ENCODE measurements at regions of chr12 and their contacts with region 1.

Region 1: GRCh38 chr12:93894391-93895088 is 217.4 kb downstream of the CRADD start:
- DNase-seq: peak; percentile 85 to 95
- ATAC-seq: peak; percentile 88 to 96 (median 90)
- H3K4me3 ChIP-seq: peak overlapping the region in 7 of 10 donors; percentile 7 to 35 (median 28)
- H3K27ac ChIP-seq: peak overlapping the region; percentile 70 to 94 (median 86)
- H3K4me1 ChIP-seq: peaks cover 20 to 55% (median 42%) of the 10 kb centered on the region in 9 donors
- H3K27me3 ChIP-seq: no peaks in the 10 kb centered on the region
- CTCF ChIP-seq: peak in 2 of 9 donors; percentile 5 to 8

Region 2: DNA sequence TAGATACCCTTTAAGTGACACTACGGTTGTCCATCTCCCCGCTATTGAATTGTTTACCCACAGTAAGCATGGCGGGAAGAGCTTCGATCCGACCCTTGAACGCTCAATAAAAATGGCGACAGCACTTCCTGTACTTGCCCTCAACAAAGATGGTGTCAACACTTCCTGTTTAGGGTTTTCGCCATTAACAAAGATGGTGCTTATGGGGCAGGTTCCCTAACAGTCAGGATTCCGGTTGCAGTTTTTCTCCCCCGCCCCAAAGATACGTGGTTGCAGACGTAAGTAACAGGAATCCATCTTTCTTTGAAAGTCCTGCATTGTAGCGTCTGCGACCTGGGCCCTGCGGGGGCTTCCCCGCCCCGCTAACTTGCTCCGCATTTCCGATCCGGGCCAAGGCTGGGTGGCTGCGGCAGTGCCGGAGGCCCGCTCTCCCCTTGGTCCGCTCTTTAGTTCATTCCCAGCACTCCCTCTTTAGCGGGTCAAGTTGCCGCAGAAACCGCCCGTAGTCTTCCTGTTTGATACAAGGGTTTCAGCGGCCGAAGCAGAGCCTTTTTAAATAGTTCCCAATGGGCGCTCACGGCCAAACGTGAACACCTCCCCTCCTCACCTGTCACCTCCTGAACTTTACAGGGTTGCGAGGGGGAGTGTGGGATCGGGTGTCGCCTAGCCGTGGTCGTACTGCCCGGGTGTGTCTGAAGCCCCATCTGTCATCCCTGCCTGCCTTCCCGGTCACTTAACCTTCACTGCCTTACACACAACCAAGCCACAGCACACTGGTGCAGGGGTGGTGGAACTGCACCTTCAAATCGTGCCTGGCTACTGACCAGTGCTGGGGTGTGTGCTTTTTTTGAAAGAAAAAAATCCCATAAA is 217.1 kb before region 1 on chr12 and contains the start of gene CRADD:
- intact Hi-C with region 1: loop called in 3 of 10 experiments (anchors 5 to 10 kb)
- DNase-seq: peak; percentile 67 to 93
- ATAC-seq: peak; percentile 91 to 97 (median 94)
- H3K4me3 ChIP-seq: peak within 1 kb of the TSS; percentile 48 to 80 (median 66)
- H3K27ac ChIP-seq: peak within 1 kb of the TSS; percentile 86 to 99 (median 98)
- H3K4me1 ChIP-seq: peaks cover 0 to 51% (median 27%) of the 10 kb centered on the region in 9 donors
- H3K27me3 ChIP-seq: no peaks in the 10 kb centered on the region
- CTCF ChIP-seq: no peak
- total RNA-seq, gene CRADD: 36.3 to 80.1 (median 60.2) TPM

Region 3: DNA sequence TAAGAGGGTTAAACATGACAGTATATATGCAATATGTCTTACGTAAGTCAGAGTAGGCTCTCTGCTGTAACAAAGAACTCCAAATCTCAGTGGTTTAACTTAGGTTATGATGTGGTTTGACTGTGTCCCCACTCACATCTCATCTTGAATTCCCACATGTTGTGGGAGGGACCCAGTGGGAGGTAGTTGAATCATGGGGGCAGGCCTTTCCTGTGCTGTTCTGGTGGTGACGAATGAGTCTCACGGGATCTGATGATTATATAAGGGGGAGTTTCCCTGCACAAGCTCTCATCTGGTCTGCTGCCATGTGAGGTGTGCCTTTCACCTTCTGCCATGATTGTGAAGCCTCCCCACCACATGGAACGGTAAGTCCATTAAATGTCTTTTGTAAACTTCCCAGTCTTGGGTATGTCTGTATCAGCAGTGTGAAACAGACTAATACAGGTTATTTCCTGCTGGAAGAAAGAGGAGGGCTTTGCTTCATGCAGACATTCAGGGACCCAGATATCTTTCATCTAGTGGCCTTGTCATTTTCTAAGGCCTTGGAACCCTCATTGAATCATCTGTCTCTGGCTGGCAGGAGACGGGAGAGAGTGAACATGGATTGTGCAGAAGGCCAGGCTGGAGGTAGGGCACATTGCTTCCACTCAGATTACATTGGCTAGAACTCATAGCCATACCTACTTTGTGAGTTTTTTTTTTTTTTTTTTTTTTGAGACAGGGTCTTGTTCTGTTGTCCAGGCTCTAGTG is 121.2 kb before region 1 on chr12:
- intact Hi-C with region 1: loop called in 5 of 10 experiments (anchors 5 to 10 kb)
- DNase-seq: no peak
- ATAC-seq: peak in 4 of 8 donors; percentile 8 to 46 (median 20)
- H3K4me3 ChIP-seq: no peak overlapping the region
- H3K27ac ChIP-seq: peak overlapping the region in 1 of 10 donors; percentile 33
- H3K4me1 ChIP-seq: peaks cover 16 to 42% (median 36%) of the 10 kb centered on the region in 9 donors
- H3K27me3 ChIP-seq: no peaks in the 10 kb centered on the region
- CTCF ChIP-seq: no peak

Region 4: DNA sequence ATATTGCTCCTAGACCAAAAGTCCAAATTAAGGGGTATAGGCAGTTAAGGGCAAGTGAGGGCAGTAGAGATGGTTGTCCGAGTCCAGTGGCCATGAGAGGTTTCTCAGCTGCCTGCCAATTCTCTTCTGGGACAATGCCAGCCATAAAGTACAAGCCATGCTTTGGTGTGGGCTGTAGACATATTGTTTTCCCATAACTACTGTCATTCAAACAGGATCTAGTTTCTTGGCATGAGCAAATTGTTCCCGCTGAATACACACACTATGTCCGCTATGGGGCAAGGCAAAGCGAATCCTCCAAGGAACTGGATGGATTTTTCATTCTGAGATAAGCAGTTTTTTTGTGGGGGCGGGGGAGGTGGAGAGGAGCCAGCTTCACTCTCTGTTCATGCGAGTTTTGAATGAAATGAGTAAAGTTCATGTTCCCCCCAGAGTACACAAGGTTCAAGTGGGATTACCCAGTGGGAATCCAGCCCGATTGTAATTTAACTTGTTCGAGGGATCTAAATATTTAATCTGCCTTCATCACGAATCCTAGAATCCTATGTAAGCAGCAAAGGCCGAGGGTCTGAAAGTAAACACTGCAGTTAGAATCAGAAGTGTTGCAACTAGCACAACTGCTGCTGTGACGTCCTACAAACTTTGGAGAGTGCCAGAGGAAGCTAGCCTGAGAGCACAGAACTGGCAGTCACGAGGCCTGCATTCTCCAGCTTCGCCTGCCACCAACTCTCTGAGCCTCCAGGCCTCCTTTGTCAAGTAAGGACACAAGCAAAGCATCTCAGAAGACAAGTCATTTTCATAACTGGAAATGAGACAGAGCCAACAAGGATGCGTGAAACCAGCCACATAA is 80.3 kb before region 1 on chr12:
- intact Hi-C with region 1: loop called in 5 of 10 experiments (anchors 2 to 10 kb)
- DNase-seq: peak; percentile 74 to 86
- ATAC-seq: peak; percentile 80 to 94 (median 90)
- H3K4me3 ChIP-seq: peak overlapping the region in 7 of 10 donors; percentile 1 to 29 (median 18)
- H3K27ac ChIP-seq: peak overlapping the region; percentile 80 to 96 (median 90)
- H3K4me1 ChIP-seq: peaks cover 25 to 73% (median 62%) of the 10 kb centered on the region in 9 donors
- H3K27me3 ChIP-seq: no peaks in the 10 kb centered on the region
- CTCF ChIP-seq: peak in 3 of 9 donors; percentile 11 to 26 (median 12)

Region 5: DNA sequence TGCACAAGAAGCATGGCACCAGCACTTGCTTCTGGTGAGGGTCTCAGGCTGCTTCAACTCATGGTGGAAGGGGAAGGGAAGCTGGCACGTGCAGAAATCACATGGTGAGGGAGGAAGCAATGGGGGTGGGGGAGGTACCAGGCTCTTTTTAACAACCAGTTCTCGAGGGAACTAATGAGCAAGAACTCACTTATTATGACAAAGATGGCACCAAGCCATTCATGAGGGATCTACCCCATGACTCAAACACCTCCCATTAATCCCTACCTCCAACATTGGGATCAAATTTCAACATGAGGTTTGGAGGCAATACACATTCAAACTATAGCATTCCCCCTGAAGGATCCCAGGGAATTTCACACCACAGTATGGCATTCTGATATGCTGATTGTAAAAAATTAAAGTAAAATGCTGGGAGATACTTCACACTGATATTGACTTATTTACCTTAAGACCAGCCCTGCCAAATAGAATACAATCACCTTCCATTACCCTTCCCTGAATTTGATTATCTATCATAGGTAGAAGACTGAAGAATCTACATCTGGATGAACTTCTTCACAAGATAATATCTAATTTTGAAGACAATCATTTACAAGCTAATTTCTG is 52.1 kb after region 1 on chr12:
- intact Hi-C with region 1: loop called in 1 of 10 experiments (anchors 5 kb)
- DNase-seq: no peak
- ATAC-seq: no peak
- H3K4me3 ChIP-seq: no peak overlapping the region
- H3K27ac ChIP-seq: no peak overlapping the region
- H3K4me1 ChIP-seq: no peaks in the 10 kb centered on the region
- H3K27me3 ChIP-seq: no peaks in the 10 kb centered on the region
- CTCF ChIP-seq: no peak

Region 6: DNA sequence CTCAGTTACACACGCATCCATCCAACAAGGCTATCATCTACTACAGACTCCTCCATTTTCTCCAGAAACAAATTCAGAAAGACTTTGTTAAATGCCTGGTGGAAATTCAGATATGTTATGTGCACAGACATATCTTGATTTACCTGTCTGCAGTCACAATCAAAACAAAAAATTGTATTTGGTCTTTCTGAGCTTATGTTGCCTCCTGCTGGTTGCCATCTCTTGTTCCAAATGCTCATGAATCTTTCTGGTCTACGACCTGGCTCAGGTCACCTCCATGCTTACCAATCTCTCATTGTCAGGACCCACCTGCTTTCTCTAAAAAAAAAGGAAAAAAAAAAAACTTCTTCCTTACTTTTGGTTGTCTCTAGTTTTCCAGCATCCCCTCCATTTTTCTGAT is 84.6 kb after region 1 on chr12:
- intact Hi-C with region 1: loop called in 2 of 10 experiments (anchors 5 kb)
- DNase-seq: peak in 1 of 2 donors; percentile 19
- ATAC-seq: peak in 3 of 8 donors; percentile 49 to 57 (median 54)
- H3K4me3 ChIP-seq: no peak overlapping the region
- H3K27ac ChIP-seq: no peak overlapping the region
- H3K4me1 ChIP-seq: peaks cover 0 to 21% (median 3%) of the 10 kb centered on the region in 9 donors
- H3K27me3 ChIP-seq: no peaks in the 10 kb centered on the region
- CTCF ChIP-seq: peak in 8 of 9 donors; percentile 29 to 76 (median 58)

Region 7: GRCh38 chr12:94039914-94040313 is 145.4 kb after region 1 on chr12:
- intact Hi-C with region 1: no loop called
- DNase-seq: no peak
- ATAC-seq: peak in 7 of 8 donors; percentile 23 to 78 (median 59)
- H3K4me3 ChIP-seq: no peak overlapping the region
- H3K27ac ChIP-seq: peak overlapping the region in 2 of 10 donors; percentile 20 to 57
- H3K4me1 ChIP-seq: peaks cover 0 to 14% (median 0%) of the 10 kb centered on the region in 9 donors
- H3K27me3 ChIP-seq: no peaks in the 10 kb centered on the region
- CTCF ChIP-seq: no peak

Region 8: DNA sequence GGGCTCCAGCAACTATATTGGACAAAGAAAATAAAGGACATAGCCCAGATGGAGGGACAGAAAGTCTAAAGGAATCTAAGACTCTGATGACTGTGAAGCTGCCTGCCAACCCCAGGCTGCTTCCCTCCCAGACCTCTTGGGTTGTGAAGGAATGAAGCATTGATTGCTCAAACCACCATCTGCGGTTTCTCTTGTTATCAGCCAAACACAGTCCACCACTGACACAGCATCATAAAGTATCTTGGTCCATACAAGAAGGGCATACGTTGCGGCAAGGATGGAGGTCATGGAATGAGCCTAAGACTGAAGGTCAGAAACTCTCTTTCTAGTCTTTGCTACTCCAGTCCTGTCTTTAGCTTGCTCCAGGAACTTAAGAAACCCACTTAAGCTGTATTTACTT is 195.4 kb after region 1 on chr12:
- intact Hi-C with region 1: loop called in 1 of 10 experiments (anchors 10 kb)
- DNase-seq: no peak
- ATAC-seq: no peak
- H3K4me3 ChIP-seq: no peak overlapping the region
- H3K27ac ChIP-seq: no peak overlapping the region
- H3K4me1 ChIP-seq: no peaks in the 10 kb centered on the region
- H3K27me3 ChIP-seq: no peaks in the 10 kb centered on the region
- CTCF ChIP-seq: no peak